ENCODE measurements at regions of chr15 and their contacts with region 1.

Region 1: GRCh38 chr15:99213187-99213811 is 36.1 kb downstream of the TTC23 start:
- DNase-seq: peak; percentile 30
- ATAC-seq: peak; percentile 58
- H3K4me3 Mint-ChIP-seq: no peak overlapping the region
- H3K27ac Mint-ChIP-seq: no peak overlapping the region
- H3K4me1 Mint-ChIP-seq: no peaks in the 10 kb centered on the region
- H3K27me3 Mint-ChIP-seq: no peaks in the 10 kb centered on the region
- CTCF ChIP-seq: peak; percentile 30

Region 2: DNA sequence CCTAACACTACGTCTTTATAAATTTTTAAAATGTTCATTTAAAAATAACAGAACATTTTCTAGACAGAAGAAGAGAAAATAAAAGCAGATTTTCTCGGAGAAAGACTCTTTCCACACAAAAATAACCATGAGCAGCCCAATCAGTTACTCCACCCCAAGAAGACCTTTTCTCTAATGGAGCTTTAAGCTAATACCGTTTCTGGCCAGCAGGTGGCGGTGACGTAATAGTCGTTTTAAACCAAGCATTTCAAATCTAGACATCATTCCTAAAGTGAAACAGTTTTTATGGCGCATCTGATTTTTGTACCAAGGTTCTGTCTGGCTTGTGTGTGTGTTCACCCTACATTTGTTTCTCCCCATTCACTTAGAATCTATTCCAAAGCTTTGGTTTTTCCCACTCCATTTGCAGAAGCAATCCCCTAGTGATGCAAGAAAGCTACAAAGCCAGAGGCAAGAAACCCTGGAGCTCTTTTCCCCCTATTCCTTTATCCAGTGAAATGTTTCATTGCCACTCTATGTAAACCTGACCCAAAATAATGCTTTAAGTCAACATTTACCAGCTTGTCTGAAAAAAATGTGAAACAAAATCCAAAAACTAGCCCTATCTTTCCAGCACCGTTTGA is 901.6 kb before region 1 on chr15:
- CTCF ChIA-PET with region 1: no interaction called
- POLR2A ChIA-PET with region 1: no interaction called
- intact Hi-C with region 1: loop called (anchors 5 kb)
- DNase-seq: peak; percentile 18
- ATAC-seq: no peak
- H3K4me3 Mint-ChIP-seq: no peak overlapping the region
- H3K27ac Mint-ChIP-seq: no peak overlapping the region
- H3K4me1 Mint-ChIP-seq: no peaks in the 10 kb centered on the region
- H3K27me3 Mint-ChIP-seq: no peaks in the 10 kb centered on the region
- CTCF ChIP-seq: no peak

Region 3: DNA sequence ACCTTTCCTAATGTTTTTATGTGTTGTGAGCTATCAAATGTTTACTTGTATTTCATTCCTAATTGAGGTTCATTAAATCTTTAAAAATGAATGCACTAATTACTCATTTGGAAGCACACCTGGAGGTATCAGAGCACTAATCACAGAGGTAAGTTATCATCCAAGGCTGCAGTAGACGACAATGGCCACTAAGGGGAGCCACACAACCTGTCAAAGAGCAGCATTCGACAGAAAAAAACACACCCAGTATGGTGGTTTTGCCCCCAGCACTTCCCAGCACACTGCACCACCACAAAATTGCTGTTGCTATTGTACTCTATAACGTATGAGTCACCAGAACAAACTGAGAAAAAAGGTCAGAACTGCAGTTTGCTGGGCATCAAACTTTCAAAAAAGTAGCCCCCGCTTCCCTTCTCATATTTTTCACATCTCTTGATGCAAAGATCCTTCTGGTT is 770.9 kb before region 1 on chr15:
- CTCF ChIA-PET with region 1: no interaction called
- POLR2A ChIA-PET with region 1: no interaction called
- intact Hi-C with region 1: loop called (anchors 5 kb)
- DNase-seq: no peak
- ATAC-seq: peak; percentile 50
- H3K4me3 Mint-ChIP-seq: no peak overlapping the region
- H3K27ac Mint-ChIP-seq: no peak overlapping the region
- H3K4me1 Mint-ChIP-seq: peaks cover 5% of the 10 kb centered on the region
- H3K27me3 Mint-ChIP-seq: peaks cover 2% of the 10 kb centered on the region
- CTCF ChIP-seq: peak; percentile 44

Region 4: DNA sequence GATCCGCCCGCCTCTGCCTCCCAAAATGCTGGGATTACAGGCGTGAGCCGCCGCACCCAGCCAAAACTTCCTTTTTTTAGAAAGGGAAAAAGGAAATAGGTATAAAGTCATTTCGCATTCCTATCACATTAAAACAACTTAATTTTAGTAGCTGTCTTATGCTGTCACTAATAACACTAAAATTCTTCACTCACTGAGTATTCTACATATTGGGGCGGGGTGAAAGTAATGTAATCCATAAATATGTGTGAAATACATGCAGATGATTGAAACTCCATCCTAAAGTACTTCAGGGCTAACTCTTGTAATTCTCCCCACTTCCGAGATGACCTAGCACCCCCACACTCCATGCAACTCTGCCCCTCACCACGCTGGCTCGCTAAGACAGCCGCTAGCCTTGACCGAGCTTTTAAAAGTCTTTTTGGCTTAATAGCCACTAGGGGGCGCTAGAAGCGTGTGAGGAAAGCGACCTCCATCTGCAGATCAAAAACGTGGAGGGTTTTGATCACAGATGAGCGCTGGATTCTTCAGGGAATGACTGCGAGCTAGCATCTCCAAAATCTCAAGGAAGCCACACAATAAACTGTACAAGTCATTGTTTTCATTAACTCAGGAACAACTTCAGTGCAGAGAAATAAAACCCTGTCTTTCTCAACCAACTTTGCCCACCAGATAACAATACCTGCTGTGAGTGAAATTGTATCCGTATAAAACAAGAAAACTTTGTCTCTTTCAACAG is 694.3 kb before region 1 on chr15:
- CTCF ChIA-PET with region 1: no interaction called
- POLR2A ChIA-PET with region 1: no interaction called
- intact Hi-C with region 1: loop called (anchors 2 kb)
- DNase-seq: no peak
- ATAC-seq: peak; percentile 49
- H3K4me3 Mint-ChIP-seq: no peak overlapping the region
- H3K27ac Mint-ChIP-seq: no peak overlapping the region
- H3K4me1 Mint-ChIP-seq: peaks cover 3% of the 10 kb centered on the region
- H3K27me3 Mint-ChIP-seq: peaks cover 4% of the 10 kb centered on the region
- CTCF ChIP-seq: peak; percentile 53

Region 5: DNA sequence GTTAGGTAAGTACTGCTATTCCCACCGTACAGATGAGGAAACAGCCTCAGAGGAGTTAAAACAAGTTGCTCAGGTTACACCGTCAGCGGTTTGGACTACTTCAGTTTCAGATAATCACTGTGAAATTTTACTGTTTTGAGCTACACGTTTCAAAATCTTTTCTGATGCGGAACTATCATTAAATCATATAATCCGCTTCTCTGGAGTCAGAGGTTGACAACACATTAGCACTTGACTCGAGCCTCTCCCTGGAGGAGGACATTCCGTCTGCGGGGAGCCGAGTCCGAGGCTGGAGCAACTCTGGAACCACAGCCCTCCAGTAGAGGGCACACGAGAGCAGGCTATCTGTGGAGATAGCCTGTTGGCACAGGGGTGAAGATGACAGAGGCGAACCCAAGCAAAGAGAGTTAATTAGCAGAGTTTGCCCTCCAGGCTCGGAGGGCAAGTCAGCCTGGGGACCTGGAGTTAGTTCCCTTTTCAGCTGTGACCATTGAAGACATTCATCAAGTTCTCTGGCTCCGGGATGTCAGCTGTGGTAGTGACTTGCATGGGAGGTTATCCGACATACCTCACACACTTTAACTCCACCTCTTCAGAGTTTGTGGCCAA is 433.7 kb before region 1 on chr15:
- CTCF ChIA-PET with region 1: no interaction called
- POLR2A ChIA-PET with region 1: no interaction called
- intact Hi-C with region 1: loop called (anchors 1 kb)
- DNase-seq: peak; percentile 60
- ATAC-seq: peak; percentile 81
- H3K4me3 Mint-ChIP-seq: no peak overlapping the region
- H3K27ac Mint-ChIP-seq: no peak overlapping the region
- H3K4me1 Mint-ChIP-seq: peaks cover 25% of the 10 kb centered on the region
- H3K27me3 Mint-ChIP-seq: peaks cover 17% of the 10 kb centered on the region
- CTCF ChIP-seq: no peak

Region 6: GRCh38 chr15:98881526-98882520 is 331.5 kb before region 1 on chr15:
- CTCF ChIA-PET with region 1: no interaction called
- POLR2A ChIA-PET with region 1: no interaction called
- intact Hi-C with region 1: loop called (anchors 5 kb)
- DNase-seq: no peak
- ATAC-seq: peak; percentile 42
- H3K4me3 Mint-ChIP-seq: no peak overlapping the region
- H3K27ac Mint-ChIP-seq: no peak overlapping the region
- H3K4me1 Mint-ChIP-seq: peaks cover 8% of the 10 kb centered on the region
- H3K27me3 Mint-ChIP-seq: peaks cover 2% of the 10 kb centered on the region
- CTCF ChIP-seq: peak; percentile 34

Region 7: GRCh38 chr15:99104788-99105513 is 108.3 kb before region 1 on chr15 and contains the start of gene SYNM:
- CTCF ChIA-PET with region 1: interaction called, 4 read pairs
- POLR2A ChIA-PET with region 1: no interaction called
- intact Hi-C with region 1: loop called (anchors 1 kb)
- DNase-seq: peak; percentile 34
- ATAC-seq: peak; percentile 72
- H3K4me3 Mint-ChIP-seq: peak within 1 kb of the TSS; percentile 64
- H3K27ac Mint-ChIP-seq: no peak within 1 kb of the TSS
- H3K4me1 Mint-ChIP-seq: peaks cover 10% of the 10 kb centered on the region
- H3K27me3 Mint-ChIP-seq: peaks cover 42% of the 10 kb centered on the region
- CTCF ChIP-seq: no peak
- total RNA-seq, gene SYNM: 0.02 and 0.05 TPM in 2 replicates

Region 8: GRCh38 chr15:99197856-99198255 is 15.4 kb before region 1 on chr15:
- CTCF ChIA-PET with region 1: no interaction called
- POLR2A ChIA-PET with region 1: no interaction called
- intact Hi-C with region 1: no loop called
- DNase-seq: no peak
- ATAC-seq: no peak
- H3K4me3 Mint-ChIP-seq: no peak overlapping the region
- H3K27ac Mint-ChIP-seq: no peak overlapping the region
- H3K4me1 Mint-ChIP-seq: no peaks in the 10 kb centered on the region
- H3K27me3 Mint-ChIP-seq: no peaks in the 10 kb centered on the region
- CTCF ChIP-seq: no peak